Activated B cell treated with CpG ODN at 0.5 μM for 24 hours (primary cell): ENCODE measurements at regions of chr2 and their contacts with region 1.

Region 1: GRCh38 chr2:11477994-11478393 is 12.0 kb upstream of the E2F6 start:
- DNase-seq: peak; percentile 59
- ATAC-seq: peak; percentile 71
- H3K4me3 Mint-ChIP-seq: no peak overlapping the region
- H3K27ac Mint-ChIP-seq: no peak overlapping the region
- H3K4me1 Mint-ChIP-seq: peaks cover under 1% of the 10 kb centered on the region
- H3K27me3 Mint-ChIP-seq: peaks cover 17% of the 10 kb centered on the region
- CTCF ChIP-seq: peak; percentile 75

Region 2: DNA sequence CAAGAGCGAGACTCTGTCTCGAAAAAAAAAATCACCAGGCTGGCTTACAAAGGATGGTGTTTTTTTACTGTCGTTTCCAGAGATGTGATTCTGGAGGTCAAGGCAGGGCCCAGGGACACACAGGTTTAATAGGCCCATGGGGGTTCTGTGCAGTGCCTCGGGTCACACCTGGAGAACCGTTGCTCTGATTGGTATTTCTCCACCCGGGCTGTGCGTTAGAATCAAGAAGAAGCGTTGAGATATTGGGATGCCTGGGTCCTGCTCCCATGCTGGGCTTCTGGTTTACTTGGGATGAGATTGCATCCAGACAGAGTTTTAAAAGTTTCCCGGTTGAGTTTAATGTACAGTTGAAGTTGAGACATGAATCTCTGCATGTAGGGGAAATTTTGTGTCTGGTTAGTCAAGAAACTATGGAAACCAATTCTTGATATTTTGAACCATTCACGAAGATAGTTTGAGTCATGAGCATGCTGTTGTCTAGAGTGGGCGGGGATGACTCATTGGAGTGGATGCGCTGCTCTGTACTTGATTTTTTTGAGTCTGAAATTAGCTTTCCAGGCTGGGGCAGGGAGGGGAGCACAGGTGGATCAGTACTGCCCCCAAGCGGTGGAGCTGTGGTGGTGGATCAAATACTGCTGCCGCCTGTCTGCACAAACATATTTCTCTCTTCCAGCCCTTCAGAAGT is 106.0 kb after region 1 on chr2:
- CTCF ChIA-PET with region 1: interaction called, 8 read pairs
- POLR2A ChIA-PET with region 1: no interaction called
- intact Hi-C with region 1: loop called (anchors 1 kb)
- DNase-seq: no peak
- ATAC-seq: peak; percentile 89
- H3K4me3 Mint-ChIP-seq: no peak overlapping the region
- H3K27ac Mint-ChIP-seq: no peak overlapping the region
- H3K4me1 Mint-ChIP-seq: no peaks in the 10 kb centered on the region
- H3K27me3 Mint-ChIP-seq: peaks cover 8% of the 10 kb centered on the region
- CTCF ChIP-seq: no peak

Region 3: DNA sequence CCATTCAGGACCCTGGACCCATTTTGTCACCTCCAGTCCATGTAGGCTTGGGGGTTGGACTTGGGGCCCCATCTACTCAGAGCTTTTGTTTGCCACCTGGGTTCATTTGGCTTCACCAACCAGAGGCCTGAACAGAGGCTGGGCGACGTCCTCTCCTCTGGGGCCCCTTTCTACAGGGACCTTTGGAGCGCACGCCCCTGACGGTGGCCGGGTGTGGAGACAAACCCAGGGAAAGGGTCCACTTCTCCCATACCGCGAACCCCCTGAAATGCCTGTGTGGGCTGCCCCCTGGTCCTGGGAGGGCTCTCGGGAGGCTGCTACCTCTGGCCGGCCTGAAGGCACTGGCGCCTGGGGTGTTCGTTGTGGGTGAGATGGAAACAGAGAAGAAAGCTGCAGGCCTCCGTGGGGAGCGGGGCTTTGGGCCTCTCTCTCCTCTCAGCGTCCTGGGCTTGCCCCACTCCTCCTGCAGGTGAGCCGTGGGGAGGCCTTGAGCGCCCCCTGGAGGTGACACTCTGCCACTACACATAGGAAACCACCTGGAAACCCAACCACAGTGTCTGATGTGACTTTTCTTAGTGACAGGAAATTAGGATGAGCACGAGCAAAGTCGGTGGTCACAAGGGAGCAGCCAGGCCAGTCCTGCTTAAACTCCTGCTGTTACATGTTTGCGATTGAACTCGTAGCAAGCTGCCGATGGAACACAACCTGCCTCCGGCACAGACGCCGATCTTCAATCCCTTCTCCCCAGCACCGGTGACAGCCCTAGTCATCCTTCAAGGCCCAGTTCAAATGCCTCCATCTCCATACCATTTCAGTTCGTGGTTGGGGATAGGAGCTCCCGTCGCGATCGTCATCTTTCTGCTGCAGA is 204.0 kb after region 1 on chr2:
- CTCF ChIA-PET with region 1: interaction called, 3 read pairs
- POLR2A ChIA-PET with region 1: no interaction called
- intact Hi-C with region 1: loop called (anchors 1 kb)
- DNase-seq: no peak
- ATAC-seq: peak; percentile 73
- H3K4me3 Mint-ChIP-seq: no peak overlapping the region
- H3K27ac Mint-ChIP-seq: no peak overlapping the region
- H3K4me1 Mint-ChIP-seq: no peaks in the 10 kb centered on the region
- H3K27me3 Mint-ChIP-seq: peaks cover 26% of the 10 kb centered on the region
- CTCF ChIP-seq: no peak